ENCODE measurements at regions of chr4 and their contacts with region 1.

Region 1: GRCh38 chr4:80173401-80173800 is 23.9 kb upstream of the PRDM8 start:
- DNase-seq: peak; percentile 87
- H3K4me3 ChIP-seq: no peak overlapping the region
- H3K27ac ChIP-seq: no peak overlapping the region
- H3K4me1 ChIP-seq: peaks cover 21% of the 10 kb centered on the region
- H3K27me3 ChIP-seq: no peaks in the 10 kb centered on the region
- CTCF ChIP-seq: no peak

Region 2: DNA sequence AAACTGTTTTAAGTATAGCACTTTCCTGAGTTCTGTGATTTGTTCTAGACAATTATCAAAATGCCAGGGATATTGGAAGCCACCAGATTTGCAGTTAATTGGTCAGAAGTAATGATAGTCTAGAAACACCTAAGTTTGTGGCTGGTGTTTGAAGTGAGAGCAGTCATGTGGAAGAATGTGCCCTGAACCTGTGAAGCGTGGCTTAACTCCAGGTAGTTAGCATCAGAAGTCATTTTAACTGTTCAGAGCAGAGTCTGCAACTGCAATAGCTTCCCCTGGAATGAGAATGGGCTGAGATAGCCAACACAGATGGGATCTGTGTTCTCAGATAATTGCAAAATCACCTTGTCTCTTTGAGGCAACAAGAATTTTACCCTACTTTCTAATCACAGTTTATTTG is 510.3 kb before region 1 on chr4:
- CTCF ChIA-PET with region 1: no interaction called
- dilution Hi-C with region 1: no loop called
- in situ Hi-C with region 1: no loop called
- intact Hi-C with region 1: no loop called
- DNase-seq: no peak
- H3K4me3 ChIP-seq: no peak overlapping the region
- H3K27ac ChIP-seq: no peak overlapping the region
- H3K4me1 ChIP-seq: no peaks in the 10 kb centered on the region
- H3K27me3 ChIP-seq: no peaks in the 10 kb centered on the region
- CTCF ChIP-seq: no peak

Region 3: DNA sequence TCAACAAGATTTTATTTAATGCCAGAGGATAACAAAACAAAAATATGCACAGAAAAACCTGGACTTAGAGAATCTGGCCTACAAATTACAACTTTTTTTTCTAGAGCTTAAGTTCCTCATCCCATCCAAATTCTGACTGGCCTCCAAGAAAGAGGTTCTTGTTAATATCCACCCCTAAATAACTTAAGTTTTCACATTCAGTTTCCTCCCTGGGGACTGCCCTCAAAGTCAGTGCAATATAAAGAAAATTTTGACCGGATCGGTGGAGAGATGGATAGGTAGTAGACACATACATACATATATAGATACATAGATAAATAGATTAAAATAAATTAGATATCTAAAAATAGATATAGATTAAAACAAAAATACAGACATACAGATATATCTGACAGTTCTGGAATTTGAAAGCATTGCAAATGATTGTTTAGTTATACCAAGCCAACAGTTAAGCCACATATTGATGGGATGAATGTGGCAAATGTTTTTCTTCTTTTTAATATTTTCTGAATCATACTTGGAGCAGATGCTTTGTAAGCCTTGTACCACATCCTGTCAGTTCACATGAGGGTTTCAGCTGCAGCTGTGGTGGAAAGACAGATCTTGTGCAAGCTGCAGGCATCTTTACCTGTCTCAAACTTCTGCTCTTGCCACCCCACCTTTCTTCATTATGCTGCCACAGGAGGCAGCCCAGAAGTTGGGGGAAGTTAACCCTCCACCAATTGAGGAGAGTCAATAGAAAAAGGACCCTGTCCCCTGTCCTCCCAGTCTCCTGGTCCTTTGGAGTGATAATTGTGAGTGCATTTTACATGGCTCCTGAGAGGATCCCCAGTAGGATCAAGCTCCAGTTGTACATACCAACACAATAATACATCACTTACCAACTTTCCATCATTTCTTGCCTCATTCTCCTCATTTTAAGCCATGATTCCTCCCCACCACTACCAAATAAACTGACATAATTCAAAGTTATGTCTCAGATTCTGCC is 34.6 kb before region 1 on chr4:
- CTCF ChIA-PET with region 1: no interaction called
- dilution Hi-C with region 1: loop called (anchors 5 kb)
- in situ Hi-C with region 1: no loop called
- intact Hi-C with region 1: no loop called
- DNase-seq: peak; percentile 79
- H3K4me3 ChIP-seq: no peak overlapping the region
- H3K27ac ChIP-seq: no peak overlapping the region
- H3K4me1 ChIP-seq: peaks cover 28% of the 10 kb centered on the region
- H3K27me3 ChIP-seq: no peaks in the 10 kb centered on the region
- CTCF ChIP-seq: no peak

Measured in mammary epithelial cell (primary cell).